ENCODE measurements at regions of chr13 and their contacts with region 1.

Region 1: GRCh38 chr13:24060993-24061392 is 99.5 kb upstream of the SPATA13 start:
- DNase-seq: no peak
- H3K4me3 Mint-ChIP-seq: no peak overlapping the region
- H3K27ac Mint-ChIP-seq: no peak overlapping the region
- H3K4me1 Mint-ChIP-seq: peaks cover 12% of the 10 kb centered on the region
- H3K27me3 Mint-ChIP-seq: peaks cover 3% of the 10 kb centered on the region

Region 2: GRCh38 chr13:24045597-24045996 is 15.4 kb before region 1 on chr13:
- CTCF ChIA-PET with region 1: no interaction called
- POLR2A ChIA-PET with region 1: no interaction called
- DNase-seq: no peak
- H3K4me3 Mint-ChIP-seq: no peak overlapping the region
- H3K27ac Mint-ChIP-seq: no peak overlapping the region
- H3K4me1 Mint-ChIP-seq: no peaks in the 10 kb centered on the region
- H3K27me3 Mint-ChIP-seq: peaks cover 4% of the 10 kb centered on the region

Region 3: DNA sequence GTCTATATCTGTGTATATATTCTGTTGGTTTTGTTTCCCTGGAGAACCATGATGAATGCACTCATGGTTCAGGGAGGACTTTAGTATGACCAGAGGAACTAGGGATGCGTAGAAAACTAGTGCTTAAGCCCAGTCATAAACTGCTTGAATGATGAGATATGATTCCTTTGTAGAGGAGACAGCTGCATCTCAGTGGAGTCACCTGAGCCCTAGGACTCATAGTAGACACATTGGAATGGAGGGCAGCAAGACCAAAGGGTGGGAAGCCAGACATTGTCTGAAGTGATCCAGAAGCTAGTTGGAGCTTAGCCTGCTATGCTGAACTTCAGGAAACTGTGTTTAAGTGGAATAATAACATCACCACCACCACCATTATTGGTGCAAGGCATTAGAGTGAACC is 10.0 kb after region 1 on chr13:
- CTCF ChIA-PET with region 1: no interaction called
- POLR2A ChIA-PET with region 1: no interaction called
- DNase-seq: no peak
- H3K4me3 Mint-ChIP-seq: no peak overlapping the region
- H3K27ac Mint-ChIP-seq: no peak overlapping the region
- H3K4me1 Mint-ChIP-seq: peaks cover 5% of the 10 kb centered on the region
- H3K27me3 Mint-ChIP-seq: peaks cover 21% of the 10 kb centered on the region

Region 4: GRCh38 chr13:24450530-24450929 is 389.5 kb after region 1 on chr13:
- CTCF ChIA-PET with region 1: no interaction called
- POLR2A ChIA-PET with region 1: interaction called, 10 read pairs
- DNase-seq: no peak
- H3K4me3 Mint-ChIP-seq: no peak overlapping the region
- H3K27ac Mint-ChIP-seq: no peak overlapping the region
- H3K4me1 Mint-ChIP-seq: no peaks in the 10 kb centered on the region
- H3K27me3 Mint-ChIP-seq: no peaks in the 10 kb centered on the region